Heart left ventricle (tissue), 16 donors: ENCODE measurements at regions of chr13 and their contacts with region 1.

Region 1: DNA sequence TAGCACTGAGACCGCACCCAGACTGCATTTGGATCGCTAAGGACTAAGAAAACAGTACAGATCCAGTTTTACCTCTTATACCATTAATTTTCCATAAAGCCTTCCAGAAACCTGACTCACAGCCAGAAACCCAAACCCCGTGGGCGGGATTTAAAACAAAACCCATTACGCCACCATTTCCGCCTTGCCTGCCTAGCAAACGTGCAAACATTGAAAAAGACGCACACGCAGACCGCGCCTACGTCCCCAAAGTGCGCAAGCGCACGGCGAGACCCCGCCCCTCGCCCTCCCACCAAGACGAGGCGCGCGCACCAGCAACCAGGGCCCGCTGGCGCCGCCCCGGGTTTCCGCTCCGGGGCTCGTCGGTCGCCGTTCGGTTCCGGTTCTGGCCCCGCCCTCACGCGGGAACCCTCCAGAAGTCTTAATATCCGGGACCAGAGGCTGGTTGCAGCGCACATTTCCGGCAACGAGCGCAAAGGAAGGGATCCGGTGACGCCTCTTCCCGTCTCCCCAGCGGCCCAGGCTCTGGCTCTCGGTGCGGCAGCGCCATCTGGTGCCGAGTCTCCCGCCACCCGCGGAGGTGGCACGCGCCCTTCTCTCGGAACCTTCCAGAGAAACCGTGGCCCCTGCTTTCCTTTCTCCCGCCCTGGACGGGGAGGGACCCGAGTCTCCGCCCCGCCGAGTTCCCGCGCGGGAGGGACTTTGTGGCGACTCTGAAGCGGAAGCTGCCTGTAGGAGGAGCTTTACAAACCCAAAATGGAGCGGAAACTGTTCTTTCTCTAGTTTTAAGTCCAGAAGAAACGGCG is 256.9 kb upstream of the STARD13 start:
- DNase-seq: peak; percentile 98 to 99 (median 99)
- ATAC-seq: peak; percentile 92 to 98 (median 94)
- H3K4me3 ChIP-seq: peak overlapping the region; percentile 29 to 63 (median 54)
- H3K27ac ChIP-seq: peak overlapping the region; percentile 94 to 100 (median 97)
- H3K4me1 ChIP-seq: peaks cover 6 to 50% (median 26%) of the 10 kb centered on the region in 12 donors
- H3K27me3 ChIP-seq: no peaks in the 10 kb centered on the region
- CTCF ChIP-seq: peak; percentile 85 to 98 (median 92)
- POLR2A ChIP-seq: peak in 1 of 2 donors; percentile 56

Region 2: GRCh38 chr13:32650705-32651311 is 891.7 kb before region 1 on chr13:
- intact Hi-C with region 1: loop called in 2 of 10 experiments (anchors 5 to 10 kb)
- DNase-seq: peak in 3 of 5 donors; percentile 35 to 41 (median 41)
- ATAC-seq: peak in 3 of 4 donors; percentile 66 to 80 (median 69)
- H3K4me3 ChIP-seq: no peak overlapping the region
- H3K27ac ChIP-seq: no peak overlapping the region
- H3K4me1 ChIP-seq: peaks cover 0 to 37% (median 10%) of the 10 kb centered on the region in 12 donors
- H3K27me3 ChIP-seq: no peaks in the 10 kb centered on the region
- CTCF ChIP-seq: peak; percentile 52 to 81 (median 72)
- POLR2A ChIP-seq: no peak

Region 3: DNA sequence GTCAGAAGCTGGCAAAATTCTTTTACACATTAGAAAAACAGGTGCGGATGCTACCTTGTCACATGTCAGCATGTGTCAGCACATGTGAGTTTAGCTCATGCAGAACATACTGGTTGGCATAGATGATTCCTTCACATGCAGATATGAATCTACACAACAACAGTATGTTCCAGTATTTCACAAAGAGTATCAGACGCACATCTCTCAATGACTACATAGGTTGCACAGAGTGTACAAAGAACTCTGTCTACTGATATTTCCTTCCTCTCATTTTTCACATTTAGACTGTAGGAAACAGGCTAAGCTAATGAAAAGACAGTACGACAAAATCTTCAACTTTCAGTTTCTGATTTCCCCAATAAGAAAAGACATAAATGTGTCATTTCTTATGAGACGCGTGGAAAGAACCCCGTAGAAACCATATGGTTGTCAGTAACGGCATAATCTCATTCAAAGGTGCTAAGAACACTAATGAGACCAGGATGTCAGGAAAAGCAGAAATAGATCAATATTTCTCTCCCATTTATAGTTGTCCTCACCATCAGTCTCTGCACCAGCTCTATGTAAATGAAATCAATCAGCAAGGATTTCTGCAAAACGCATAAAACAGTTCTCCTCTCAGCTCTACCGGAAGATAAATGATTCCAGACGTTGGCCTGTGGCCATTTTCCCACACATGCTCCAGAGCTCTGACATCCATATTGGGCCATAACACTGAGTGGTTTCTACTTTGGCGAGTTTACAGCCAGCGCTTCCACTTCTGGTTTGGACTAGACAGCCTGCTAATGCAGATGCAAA is 338.2 kb before region 1 on chr13:
- intact Hi-C with region 1: loop called in 1 of 10 experiments (anchors 5 kb)
- DNase-seq: peak; percentile 63 to 90 (median 87)
- ATAC-seq: peak; percentile 59 to 84 (median 82)
- H3K4me3 ChIP-seq: peak overlapping the region in 11 of 12 donors; percentile 15 to 63 (median 47)
- H3K27ac ChIP-seq: peak overlapping the region; percentile 65 to 90 (median 82)
- H3K4me1 ChIP-seq: peaks cover 3 to 94% (median 79%) of the 10 kb centered on the region in 12 donors
- H3K27me3 ChIP-seq: no peaks in the 10 kb centered on the region
- CTCF ChIP-seq: no peak
- POLR2A ChIP-seq: no peak

Region 4: DNA sequence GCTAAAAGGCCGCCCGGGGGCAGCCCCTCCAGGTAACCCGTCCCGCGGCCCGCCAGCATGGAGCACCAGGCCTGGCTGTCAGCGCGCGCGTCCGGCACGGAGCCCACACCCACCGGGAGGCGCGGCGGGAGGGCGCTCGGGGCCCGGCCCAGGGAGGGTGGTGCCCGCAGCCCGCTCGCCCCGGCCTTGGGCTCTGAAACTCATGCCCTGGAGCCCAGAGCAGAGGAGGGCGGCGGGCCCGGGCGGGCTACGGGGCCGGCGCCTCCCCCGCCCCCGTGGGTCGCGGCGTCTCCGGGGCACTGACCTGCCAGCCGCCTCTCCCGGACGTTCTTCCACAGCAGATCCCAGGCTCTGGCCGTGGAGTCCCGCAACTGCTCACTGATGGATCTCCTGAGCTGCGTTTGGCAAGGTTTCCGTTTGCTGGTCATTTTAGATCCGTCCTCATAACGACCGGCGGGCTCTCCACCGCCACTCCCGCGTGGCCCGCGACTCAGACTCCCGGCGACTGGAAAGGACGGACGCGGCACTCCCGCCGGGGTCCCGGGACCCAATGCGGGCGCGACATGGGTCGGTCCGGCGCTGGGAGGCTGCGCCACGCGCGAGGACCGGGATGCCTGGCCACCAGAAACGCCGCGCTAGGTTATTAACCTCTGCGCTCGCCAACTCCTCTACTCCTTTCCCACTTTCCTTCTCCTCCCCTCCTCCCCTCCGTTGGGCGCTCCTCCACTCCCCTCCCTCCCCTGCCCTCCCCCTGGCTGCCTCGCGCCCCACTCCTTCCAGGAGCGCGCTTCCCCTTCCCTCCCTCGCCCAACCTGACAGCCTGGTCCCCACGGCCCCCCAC is 192.3 kb before region 1 on chr13:
- intact Hi-C with region 1: loop called in 6 of 10 experiments (anchors 2 to 5 kb)
- DNase-seq: peak; percentile 60 to 84 (median 70)
- ATAC-seq: peak; percentile 20 to 88 (median 72)
- H3K4me3 ChIP-seq: peak overlapping the region; percentile 58 to 91 (median 86)
- H3K27ac ChIP-seq: peak overlapping the region; percentile 66 to 95 (median 87)
- H3K4me1 ChIP-seq: peaks cover 0 to 65% (median 23%) of the 10 kb centered on the region in 12 donors
- H3K27me3 ChIP-seq: no peaks in the 10 kb centered on the region
- CTCF ChIP-seq: no peak
- POLR2A ChIP-seq: peak in 1 of 2 donors; percentile 28

Region 5: DNA sequence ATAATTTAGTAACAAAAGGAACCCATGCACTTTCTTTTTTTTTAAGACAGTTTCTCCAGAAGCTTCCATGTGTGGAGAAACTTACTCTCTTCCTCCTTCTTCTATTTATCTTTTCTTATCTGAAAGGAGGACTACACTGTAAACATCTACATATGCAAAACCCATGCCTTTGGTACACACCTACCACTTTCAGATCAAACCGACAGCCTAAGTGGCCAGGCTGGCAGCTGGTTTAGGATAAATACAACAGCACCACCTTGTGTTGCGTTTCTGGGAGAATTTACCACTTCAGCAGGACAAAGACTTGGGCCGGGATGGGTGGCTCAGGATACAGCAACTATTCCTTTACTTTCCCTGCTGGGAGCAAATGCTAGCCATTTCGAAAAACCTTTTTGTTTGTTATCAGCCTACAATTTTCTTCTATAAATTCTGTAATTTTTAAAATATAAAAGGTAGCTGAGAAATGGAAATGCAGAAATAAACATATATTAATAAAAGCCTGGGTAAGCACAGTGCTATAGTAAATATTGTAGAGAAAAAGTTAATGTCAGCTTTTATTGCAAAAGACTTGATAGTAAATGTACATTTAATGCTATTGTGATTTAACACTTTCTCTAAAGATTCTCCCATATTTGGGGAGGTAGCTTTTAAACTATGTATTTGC is 181.4 kb after region 1 on chr13:
- intact Hi-C with region 1: loop called (anchors 1 to 5 kb)
- DNase-seq: peak; percentile 68 to 84 (median 79)
- ATAC-seq: peak; percentile 80 to 88 (median 85)
- H3K4me3 ChIP-seq: no peak overlapping the region
- H3K27ac ChIP-seq: peak overlapping the region in 11 of 12 donors; percentile 11 to 83 (median 63)
- H3K4me1 ChIP-seq: peaks cover 0 to 54% (median 36%) of the 10 kb centered on the region in 12 donors
- H3K27me3 ChIP-seq: no peaks in the 10 kb centered on the region
- CTCF ChIP-seq: peak; percentile 68 to 88 (median 80)
- POLR2A ChIP-seq: no peak